MCF 10A (cell line): ENCODE measurements at regions of chr20 and their contacts with region 1.

Region 1: GRCh38 chr20:35092524-35093266 is at the start of gene TRPC4AP:
- DNase-seq: peak; percentile 89
- H3K4me3 Mint-ChIP-seq: peak within 1 kb of the TSS; percentile 78
- H3K27ac Mint-ChIP-seq: peak within 1 kb of the TSS; percentile 55
- H3K4me1 Mint-ChIP-seq: peaks cover 27% of the 10 kb centered on the region
- H3K27me3 Mint-ChIP-seq: no peaks in the 10 kb centered on the region
- CTCF ChIP-seq: peak; percentile 96
- total RNA-seq, gene TRPC4AP: 51.8 and 56.3 TPM in 2 replicates

Region 2: GRCh38 chr20:35066194-35066593 is 26.5 kb before region 1 on chr20:
- CTCF ChIA-PET with region 1: interaction called, 13 read pairs
- POLR2A ChIA-PET with region 1: interaction called, 5 read pairs
- intact Hi-C with region 1: no loop called
- DNase-seq: peak; percentile 14
- H3K4me3 Mint-ChIP-seq: no peak overlapping the region
- H3K27ac Mint-ChIP-seq: no peak overlapping the region
- H3K4me1 Mint-ChIP-seq: no peaks in the 10 kb centered on the region
- H3K27me3 Mint-ChIP-seq: no peaks in the 10 kb centered on the region
- CTCF ChIP-seq: no peak

Region 3: DNA sequence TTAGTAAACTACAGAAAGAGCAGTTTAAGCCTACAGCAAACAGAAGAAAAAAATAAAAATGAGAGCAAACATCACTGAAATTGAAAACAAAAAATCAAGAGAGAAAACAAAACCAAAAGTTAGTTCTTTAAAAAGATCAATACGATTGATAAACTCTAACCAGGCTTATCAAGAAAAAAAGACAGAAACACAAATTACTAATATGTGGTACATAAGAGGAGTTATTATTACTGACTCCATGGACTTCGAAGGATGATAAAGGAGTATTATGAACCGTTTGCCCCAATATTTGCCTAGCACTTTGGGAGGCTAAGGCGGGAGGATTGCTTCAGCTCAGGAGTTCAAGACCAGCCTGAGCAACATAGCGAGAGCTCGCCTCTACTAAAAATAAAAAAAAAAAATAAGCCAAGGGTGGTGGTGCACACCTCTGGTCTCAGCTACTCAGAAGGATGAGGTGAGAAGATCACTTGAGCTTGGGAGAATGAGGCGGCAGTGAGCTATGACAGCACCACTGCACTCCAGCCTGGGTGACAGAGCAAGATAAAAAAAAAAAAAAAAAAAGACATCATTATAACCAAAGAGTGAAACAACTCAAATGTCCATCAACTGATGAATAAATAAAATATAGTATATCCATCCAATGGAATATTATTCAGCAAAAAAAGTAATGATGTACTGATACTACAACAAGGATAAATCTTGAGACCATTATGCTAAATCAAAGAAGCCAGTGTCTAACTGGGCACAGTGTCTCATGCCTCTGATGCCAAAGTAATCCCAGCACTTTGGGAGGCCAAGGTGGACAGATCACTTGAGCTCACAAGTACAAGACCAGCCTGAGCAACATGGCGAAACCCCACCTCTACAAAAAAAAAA is 13.0 kb before region 1 on chr20:
- CTCF ChIA-PET with region 1: interaction called, 7 read pairs
- POLR2A ChIA-PET with region 1: interaction called, 10 read pairs
- intact Hi-C with region 1: no loop called
- DNase-seq: no peak
- H3K4me3 Mint-ChIP-seq: no peak overlapping the region
- H3K27ac Mint-ChIP-seq: no peak overlapping the region
- H3K4me1 Mint-ChIP-seq: peaks cover 11% of the 10 kb centered on the region
- H3K27me3 Mint-ChIP-seq: no peaks in the 10 kb centered on the region
- CTCF ChIP-seq: no peak

Region 4: GRCh38 chr20:35104685-35105295 is 12.1 kb after region 1 on chr20:
- CTCF ChIA-PET with region 1: interaction called, 11 read pairs
- POLR2A ChIA-PET with region 1: interaction called, 4 read pairs
- intact Hi-C with region 1: no loop called
- DNase-seq: no peak
- H3K4me3 Mint-ChIP-seq: no peak overlapping the region
- H3K27ac Mint-ChIP-seq: no peak overlapping the region
- H3K4me1 Mint-ChIP-seq: peaks cover 5% of the 10 kb centered on the region
- H3K27me3 Mint-ChIP-seq: no peaks in the 10 kb centered on the region
- CTCF ChIP-seq: no peak

Region 5: GRCh38 chr20:35207950-35208611 is 115.4 kb after region 1 on chr20:
- CTCF ChIA-PET with region 1: interaction called, 83 read pairs
- POLR2A ChIA-PET with region 1: interaction called, 6 read pairs
- intact Hi-C with region 1: loop called (anchors 1 kb)
- DNase-seq: peak; percentile 84
- H3K4me3 Mint-ChIP-seq: no peak overlapping the region
- H3K27ac Mint-ChIP-seq: no peak overlapping the region
- H3K4me1 Mint-ChIP-seq: no peaks in the 10 kb centered on the region
- H3K27me3 Mint-ChIP-seq: no peaks in the 10 kb centered on the region
- CTCF ChIP-seq: peak; percentile 86

Region 6: DNA sequence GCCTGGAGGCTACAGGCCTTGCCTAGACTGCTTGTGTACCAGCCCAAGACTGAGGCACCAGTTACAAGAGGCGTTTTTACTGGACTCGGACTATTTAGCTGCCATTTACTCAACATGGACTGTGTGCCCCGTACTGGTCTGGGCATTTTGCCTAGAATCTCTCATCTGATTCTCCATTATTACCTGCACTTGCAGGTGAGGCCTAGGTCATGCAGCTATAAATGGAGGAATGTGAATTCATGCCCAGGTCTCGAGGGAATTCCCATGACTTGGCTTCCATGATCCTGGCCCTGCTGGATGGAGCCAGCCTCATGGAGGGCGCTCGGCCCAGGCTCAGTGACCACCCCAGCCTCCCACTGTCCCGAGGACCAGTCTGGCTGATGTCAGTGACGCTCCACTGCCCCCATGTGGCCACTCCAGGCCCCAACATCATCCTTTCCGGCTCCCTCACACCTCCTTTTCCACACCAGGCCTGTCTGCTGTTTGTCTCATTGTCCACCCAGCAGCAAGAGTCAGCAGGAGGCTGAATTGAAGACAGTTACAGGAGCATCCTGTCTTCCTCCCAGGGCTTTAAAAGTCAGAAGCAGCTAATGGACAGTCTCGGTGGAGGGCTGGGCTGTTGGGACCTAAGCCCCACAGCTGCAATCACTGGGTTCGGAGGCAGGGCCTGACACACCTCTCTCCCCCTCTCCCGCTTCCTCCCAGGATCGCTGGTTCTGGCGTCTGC is 176.5 kb after region 1 on chr20:
- CTCF ChIA-PET with region 1: interaction called, 19 read pairs
- POLR2A ChIA-PET with region 1: interaction called, 3 read pairs
- intact Hi-C with region 1: no loop called
- DNase-seq: peak; percentile 72
- H3K4me3 Mint-ChIP-seq: no peak overlapping the region
- H3K27ac Mint-ChIP-seq: no peak overlapping the region
- H3K4me1 Mint-ChIP-seq: peaks cover 11% of the 10 kb centered on the region
- H3K27me3 Mint-ChIP-seq: no peaks in the 10 kb centered on the region
- CTCF ChIP-seq: peak; percentile 82